ENCODE measurements at regions of chr6 and their contacts with region 1.

Region 1: GRCh38 chr6:116680975-116681808 is at the start of gene KPNA5:
- H3K4me3 ChIP-seq: peak within 1 kb of the TSS; percentile 82
- H3K27ac ChIP-seq: peak within 1 kb of the TSS; percentile 90
- H3K4me1 ChIP-seq: peaks cover 4% of the 10 kb centered on the region; the same call in 1 of the 2 replicates
- CTCF ChIP-seq: 0 out of 2 replicates have a peak, but pooled peaks have one; percentile 13

Region 2: GRCh38 chr6:116611056-116611455 is 70.1 kb before region 1 on chr6:
- CTCF ChIA-PET with region 1: no interaction called
- POLR2A ChIA-PET with region 1: no interaction called
- H3K4me3 ChIP-seq: no peak overlapping the region
- H3K27ac ChIP-seq: no peak overlapping the region
- H3K4me1 ChIP-seq: no peaks in the 10 kb centered on the region
- CTCF ChIP-seq: no peak

Region 3: DNA sequence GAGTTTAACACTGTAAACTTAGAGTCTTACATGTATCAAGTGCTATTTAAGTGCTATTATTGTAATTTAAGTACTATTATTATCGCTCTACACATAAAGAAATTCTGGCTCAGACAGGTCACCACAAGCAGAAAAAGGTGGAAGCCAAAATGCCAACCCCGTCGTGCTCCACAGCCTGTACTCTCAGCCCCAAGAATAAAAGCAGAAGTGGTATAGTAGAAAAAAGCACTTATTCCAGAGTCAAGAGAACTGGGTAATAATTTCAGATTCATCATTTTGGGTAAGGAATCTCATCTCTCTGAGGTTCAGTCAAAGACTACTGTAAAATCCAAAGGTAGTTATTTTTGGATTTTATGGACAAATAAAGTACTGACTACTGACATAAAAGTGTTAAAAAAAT is 13.6 kb before region 1 on chr6:
- CTCF ChIA-PET with region 1: interaction called, 4 read pairs
- POLR2A ChIA-PET with region 1: interaction called, 15 read pairs
- H3K4me3 ChIP-seq: peak overlapping the region; percentile 76
- H3K27ac ChIP-seq: peak overlapping the region; percentile 76
- H3K4me1 ChIP-seq: peaks cover 7% of the 10 kb centered on the region
- CTCF ChIP-seq: no peak

Measured in HEK293 (cell line).